HEK293 (cell line): ENCODE measurements at regions of chrX and their contacts with region 1.

Region 1: DNA sequence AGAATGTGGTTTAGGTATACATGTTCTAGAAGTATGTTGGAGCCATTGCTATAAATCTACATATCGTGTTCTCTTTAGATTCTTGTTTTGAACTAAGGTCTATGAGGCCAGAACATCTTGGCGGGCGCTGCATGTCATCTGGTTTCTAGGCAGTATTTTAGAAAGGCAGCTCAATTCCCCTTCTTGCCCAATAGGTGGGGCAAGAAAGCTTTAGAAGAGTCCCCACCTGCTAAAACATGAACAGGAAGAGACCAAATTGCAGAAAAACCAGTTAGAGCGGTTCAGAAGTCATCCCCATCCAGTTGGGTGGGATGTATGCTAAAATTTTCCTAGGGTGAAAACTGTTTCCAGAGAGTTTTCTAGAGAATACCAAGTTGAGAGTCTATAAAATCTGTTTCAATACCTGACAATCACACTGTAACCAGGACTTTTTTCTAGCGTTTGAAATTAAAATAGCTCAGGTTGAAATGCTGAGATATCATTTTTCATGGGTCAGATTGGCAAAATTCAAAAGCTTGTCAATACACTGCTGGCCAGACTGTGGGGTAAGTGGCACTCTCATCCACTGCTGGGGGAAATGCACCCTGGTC is 17.5 kb upstream of the SH3KBP1 start:
- H3K4me3 ChIP-seq: no peak overlapping the region
- H3K27ac ChIP-seq: no peak overlapping the region
- H3K4me1 ChIP-seq: no peaks in the 10 kb centered on the region; the same call in 1 of the 2 replicates
- CTCF ChIP-seq: no peak

Region 2: GRCh38 chrX:20056704-20057103 is 151.8 kb after region 1 on chrX:
- CTCF ChIA-PET with region 1: interaction called, 10 read pairs
- POLR2A ChIA-PET with region 1: no interaction called
- H3K4me3 ChIP-seq: no peak overlapping the region
- H3K27ac ChIP-seq: no peak overlapping the region
- H3K4me1 ChIP-seq: no peaks in the 10 kb centered on the region
- CTCF ChIP-seq: no peak